ENCODE measurements at regions of chr14 and their contacts with region 1.

Region 1: GRCh38 chr14:99982537-99983250 is 82.5 kb upstream of the EVL start:
- DNase-seq: peak; percentile 49
- H3K4me3 Mint-ChIP-seq: no peak overlapping the region
- H3K27ac Mint-ChIP-seq: no peak overlapping the region
- H3K4me1 Mint-ChIP-seq: peaks cover 16% of the 10 kb centered on the region
- H3K27me3 Mint-ChIP-seq: no peaks in the 10 kb centered on the region

Region 2: DNA sequence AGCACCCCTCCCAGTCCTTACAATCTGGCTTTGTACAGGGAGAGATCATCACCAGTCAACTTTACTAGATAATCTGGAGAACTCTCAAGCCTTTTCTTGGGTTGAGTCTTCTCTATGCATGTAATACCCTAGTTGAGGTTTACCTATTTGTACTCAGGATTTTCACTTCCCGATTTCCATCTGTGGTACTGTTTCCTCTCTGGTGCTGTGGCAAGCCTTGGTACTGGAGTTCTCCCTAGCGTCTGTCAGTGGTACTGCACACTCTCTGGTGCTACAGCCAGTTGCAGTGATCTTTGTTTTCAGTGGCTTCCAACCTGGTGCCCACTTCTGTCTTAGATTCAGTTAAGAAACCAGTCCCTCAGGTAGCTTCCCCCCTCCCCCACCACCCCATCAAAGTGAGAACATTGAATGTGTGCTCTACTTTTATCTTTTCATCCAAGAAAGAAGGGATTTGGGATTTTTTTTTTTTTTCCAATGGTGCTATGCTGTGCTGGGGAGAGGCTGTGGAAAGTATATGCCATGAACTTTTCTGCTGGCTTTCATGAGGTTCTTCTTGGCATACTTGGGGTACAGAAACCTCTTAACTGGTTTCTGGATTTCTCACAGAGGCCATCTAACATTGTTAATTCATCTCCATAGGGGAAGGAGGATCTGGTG is 13.1 kb after region 1 on chr14:
- intact Hi-C with region 1: loop called (anchors 1 kb)
- DNase-seq: peak; percentile 47
- H3K4me3 Mint-ChIP-seq: no peak overlapping the region
- H3K27ac Mint-ChIP-seq: no peak overlapping the region
- H3K4me1 Mint-ChIP-seq: peaks cover 8% of the 10 kb centered on the region
- H3K27me3 Mint-ChIP-seq: peaks cover 27% of the 10 kb centered on the region

Region 3: GRCh38 chr14:100025111-100025510 is 42.4 kb after region 1 on chr14:
- intact Hi-C with region 1: loop called (anchors 1 kb)
- DNase-seq: peak; percentile 13
- H3K4me3 Mint-ChIP-seq: no peak overlapping the region
- H3K27ac Mint-ChIP-seq: peak overlapping the region; percentile 34
- H3K4me1 Mint-ChIP-seq: peaks cover 11% of the 10 kb centered on the region
- H3K27me3 Mint-ChIP-seq: no peaks in the 10 kb centered on the region

Region 4: GRCh38 chr14:100049220-100049619 is 66.5 kb after region 1 on chr14:
- intact Hi-C with region 1: loop called (anchors 2 kb)
- DNase-seq: no peak
- H3K4me3 Mint-ChIP-seq: no peak overlapping the region
- H3K27ac Mint-ChIP-seq: peak overlapping the region; percentile 18
- H3K4me1 Mint-ChIP-seq: peaks cover 33% of the 10 kb centered on the region
- H3K27me3 Mint-ChIP-seq: no peaks in the 10 kb centered on the region

Region 5: DNA sequence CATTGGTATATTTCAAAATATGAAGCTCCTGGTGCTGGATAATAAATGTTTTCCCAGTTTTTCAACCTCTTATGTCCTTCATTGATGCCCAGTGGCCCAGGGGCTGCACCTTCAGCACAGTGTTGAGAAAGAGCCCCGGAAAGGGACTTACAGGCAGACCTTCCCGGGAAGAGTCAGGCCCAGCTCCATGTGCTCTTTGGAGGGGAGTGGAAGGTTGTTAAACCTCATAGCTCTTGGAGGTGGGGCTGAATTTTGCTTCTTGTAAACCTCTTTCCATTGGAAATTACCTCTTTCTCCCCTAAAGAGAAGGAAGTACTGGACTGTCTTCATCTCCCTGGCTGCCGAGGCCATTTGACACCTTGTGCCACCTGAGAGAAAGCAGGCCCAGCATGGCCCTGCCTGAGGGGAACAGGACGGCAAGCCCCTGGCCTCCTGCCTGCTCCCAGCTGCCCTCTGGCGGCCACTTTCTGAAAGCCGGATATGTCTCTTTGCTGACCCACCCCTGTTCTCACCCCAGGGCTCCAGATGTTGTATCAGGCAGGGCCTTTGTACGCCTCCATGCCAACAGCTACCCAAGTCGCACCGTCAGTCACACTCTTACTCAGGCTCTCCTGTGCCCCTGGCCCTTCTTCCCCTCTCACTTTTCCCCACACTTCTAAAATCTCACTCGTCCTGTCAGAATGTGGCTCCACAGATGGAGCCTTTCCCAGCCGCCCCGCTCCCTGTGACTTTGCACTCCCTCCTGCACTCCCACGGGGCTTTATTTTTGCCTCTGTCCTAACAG is 125.5 kb after region 1 on chr14:
- intact Hi-C with region 1: loop called (anchors 1 kb)
- DNase-seq: peak; percentile 77
- H3K4me3 Mint-ChIP-seq: no peak overlapping the region
- H3K27ac Mint-ChIP-seq: peak overlapping the region; percentile 86
- H3K4me1 Mint-ChIP-seq: peaks cover 71% of the 10 kb centered on the region
- H3K27me3 Mint-ChIP-seq: no peaks in the 10 kb centered on the region

Region 6: DNA sequence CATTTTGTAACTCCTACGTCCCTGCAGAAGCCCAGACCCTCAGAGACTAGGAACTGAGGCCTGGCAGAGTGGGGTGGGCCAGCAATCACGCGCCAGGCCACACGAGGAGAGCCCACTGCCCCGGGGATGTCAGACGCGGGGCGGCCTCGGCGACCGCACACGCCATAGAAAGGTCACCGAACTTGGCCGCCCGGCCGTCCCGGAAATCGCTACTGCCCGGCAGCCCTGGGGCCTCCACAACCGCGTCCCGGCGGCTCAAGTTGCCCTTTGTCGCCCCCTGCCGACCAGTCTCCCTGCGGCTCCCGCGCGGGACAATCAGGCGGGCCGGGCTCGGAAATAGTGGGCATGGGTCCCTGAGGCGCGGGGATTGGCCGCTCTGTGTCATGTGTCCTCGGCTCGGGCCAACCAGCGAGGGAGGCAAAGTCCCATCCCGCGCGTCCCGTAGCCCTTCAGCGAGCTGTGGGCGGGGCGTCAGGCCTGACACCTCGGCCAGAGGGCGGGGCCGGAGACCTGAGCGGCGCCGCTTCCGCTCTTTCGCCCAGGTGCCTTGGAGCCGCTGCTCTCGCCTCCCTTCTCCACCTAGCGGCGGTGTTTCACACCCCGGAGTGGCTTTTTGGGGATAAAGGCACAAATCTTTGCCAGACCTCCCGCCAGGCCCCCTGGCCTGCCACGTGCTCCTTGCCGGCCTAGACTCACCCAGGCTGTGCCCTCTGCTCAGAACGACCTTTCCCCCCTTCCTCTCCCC is 210.2 kb after region 1 on chr14:
- intact Hi-C with region 1: loop called (anchors 1 kb)
- DNase-seq: peak; percentile 100
- H3K4me3 Mint-ChIP-seq: peak overlapping the region; percentile 64
- H3K27ac Mint-ChIP-seq: peak overlapping the region; percentile 84
- H3K4me1 Mint-ChIP-seq: peaks cover 9% of the 10 kb centered on the region
- H3K27me3 Mint-ChIP-seq: no peaks in the 10 kb centered on the region

Measured in activated T-helper 2 cell treated with anti-CD3 and anti-CD28 coated beads, Interferon-gamma antibody, Interleukin-2, Interleukin-4, amounts not matched to agents 10 μg/mL and 5 μg/mL and 100 μg/mL, durations not matched to agents 14 hours and 24 hours and 36 hours (primary cell).